Activated CD4-positive, alpha-beta memory T cell treated with anti-CD3 and anti-CD28 coated beads, Interleukin-2, amount 10 ng/mL, durations not matched to agents 7 days and 5 days (primary cell): ENCODE measurements at regions of chr3 and their contacts with region 1.

Region 1: GRCh38 chr3:99842826-99843589 is 25.3 kb downstream of the CMSS1 start:
- DNase-seq: no peak
- H3K4me3 Mint-ChIP-seq: no peak overlapping the region
- H3K27ac Mint-ChIP-seq: no peak overlapping the region
- H3K4me1 Mint-ChIP-seq: peaks cover 7% of the 10 kb centered on the region
- H3K27me3 Mint-ChIP-seq: no peaks in the 10 kb centered on the region

Region 2: DNA sequence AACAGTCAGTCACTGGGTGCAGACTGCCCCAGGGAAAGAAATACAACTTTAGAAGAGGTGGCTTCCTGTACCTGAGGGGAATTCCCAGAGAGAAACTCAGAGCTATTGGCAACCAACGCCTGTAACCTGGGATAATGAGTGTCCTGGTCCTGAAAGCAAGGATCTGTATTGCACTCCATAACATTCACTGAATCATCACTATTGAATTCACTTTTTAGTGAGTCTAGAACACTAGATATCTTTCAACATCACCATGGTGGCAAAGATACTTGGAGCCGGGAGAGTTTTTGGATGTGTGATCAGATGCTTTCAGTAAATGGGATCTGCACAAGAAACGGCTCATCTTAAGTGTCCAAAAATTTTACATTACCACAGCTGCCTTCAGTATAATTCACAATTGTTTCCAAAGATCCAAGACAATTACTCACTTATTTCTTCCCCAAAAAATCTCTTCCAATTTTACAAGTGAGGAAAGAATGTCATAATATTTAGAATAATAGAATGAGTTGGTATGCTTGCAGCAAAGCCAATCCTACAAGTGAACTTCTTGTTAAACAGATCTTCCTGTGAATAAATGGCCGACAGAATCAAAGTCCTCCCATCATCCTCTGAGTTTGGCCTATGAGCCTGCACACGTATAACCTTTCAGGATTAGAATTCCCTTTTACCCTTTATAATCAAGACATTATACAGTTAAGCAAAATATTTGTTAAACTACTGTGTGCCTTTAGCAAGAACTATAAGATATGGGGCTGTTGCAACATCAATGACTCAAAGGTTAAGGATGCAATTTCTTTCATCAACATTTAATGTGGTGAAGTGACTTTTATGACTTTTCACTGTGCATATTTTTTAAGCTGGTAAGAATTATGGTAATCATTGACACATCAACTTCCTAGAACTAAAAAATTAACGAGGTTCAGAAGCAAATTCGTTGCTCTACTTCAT is 447.9 kb before region 1 on chr3:
- CTCF ChIA-PET with region 1: no interaction called
- POLR2A ChIA-PET with region 1: no interaction called
- DNase-seq: no peak
- H3K4me3 Mint-ChIP-seq: no peak overlapping the region
- H3K27ac Mint-ChIP-seq: no peak overlapping the region
- H3K4me1 Mint-ChIP-seq: no peaks in the 10 kb centered on the region
- H3K27me3 Mint-ChIP-seq: no peaks in the 10 kb centered on the region

Region 3: GRCh38 chr3:99872923-99873254 is 29.9 kb after region 1 on chr3:
- CTCF ChIA-PET with region 1: no interaction called
- POLR2A ChIA-PET with region 1: no interaction called
- DNase-seq: peak; percentile 58
- H3K4me3 Mint-ChIP-seq: no peak overlapping the region
- H3K27ac Mint-ChIP-seq: peak overlapping the region; percentile 27
- H3K4me1 Mint-ChIP-seq: peaks cover 49% of the 10 kb centered on the region
- H3K27me3 Mint-ChIP-seq: peaks cover 16% of the 10 kb centered on the region

Region 4: DNA sequence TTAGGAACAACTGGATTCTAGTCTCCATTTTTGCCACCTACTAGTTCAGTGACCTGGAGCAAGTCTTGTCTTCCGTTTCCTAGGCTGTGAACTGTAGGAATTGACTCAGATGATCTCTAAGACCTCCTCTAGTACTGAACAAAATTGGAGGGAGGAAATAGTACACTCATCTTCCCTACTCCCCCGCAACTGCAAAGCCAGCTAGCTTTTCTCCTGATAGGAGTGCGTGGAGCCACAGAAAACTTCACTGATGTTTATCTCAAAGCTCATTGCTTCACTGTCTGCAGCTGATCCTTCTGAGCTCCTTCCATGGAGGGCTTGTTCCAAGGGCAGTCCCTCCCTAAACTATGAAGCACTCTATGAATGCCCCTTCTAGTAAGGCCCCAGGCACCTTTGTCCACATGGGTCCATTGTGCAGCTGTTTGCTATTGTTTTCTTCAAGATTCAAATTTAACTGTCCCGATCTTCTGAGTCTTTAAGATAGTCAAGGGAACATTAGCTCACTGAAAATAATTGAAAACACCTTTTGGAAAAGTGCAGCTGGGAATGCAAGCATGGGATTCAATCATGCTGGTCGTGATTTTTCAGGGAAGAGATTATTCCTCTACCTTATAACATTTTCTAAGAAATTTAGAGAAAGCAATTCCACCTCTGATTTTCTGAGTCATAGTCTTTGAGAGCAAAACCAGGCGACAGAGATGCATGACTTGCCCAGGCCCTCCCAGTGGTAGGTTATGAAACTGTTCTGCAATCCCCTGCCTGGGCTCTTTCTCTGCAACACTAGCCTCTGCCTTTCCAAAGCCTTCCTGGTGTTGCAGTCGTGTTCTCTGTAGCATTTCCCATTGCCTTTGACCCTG is 247.0 kb after region 1 on chr3:
- CTCF ChIA-PET with region 1: interaction called, 11 read pairs
- POLR2A ChIA-PET with region 1: no interaction called
- DNase-seq: peak; percentile 51
- H3K4me3 Mint-ChIP-seq: no peak overlapping the region
- H3K27ac Mint-ChIP-seq: no peak overlapping the region
- H3K4me1 Mint-ChIP-seq: peaks cover 40% of the 10 kb centered on the region
- H3K27me3 Mint-ChIP-seq: peaks cover 4% of the 10 kb centered on the region

Region 5: DNA sequence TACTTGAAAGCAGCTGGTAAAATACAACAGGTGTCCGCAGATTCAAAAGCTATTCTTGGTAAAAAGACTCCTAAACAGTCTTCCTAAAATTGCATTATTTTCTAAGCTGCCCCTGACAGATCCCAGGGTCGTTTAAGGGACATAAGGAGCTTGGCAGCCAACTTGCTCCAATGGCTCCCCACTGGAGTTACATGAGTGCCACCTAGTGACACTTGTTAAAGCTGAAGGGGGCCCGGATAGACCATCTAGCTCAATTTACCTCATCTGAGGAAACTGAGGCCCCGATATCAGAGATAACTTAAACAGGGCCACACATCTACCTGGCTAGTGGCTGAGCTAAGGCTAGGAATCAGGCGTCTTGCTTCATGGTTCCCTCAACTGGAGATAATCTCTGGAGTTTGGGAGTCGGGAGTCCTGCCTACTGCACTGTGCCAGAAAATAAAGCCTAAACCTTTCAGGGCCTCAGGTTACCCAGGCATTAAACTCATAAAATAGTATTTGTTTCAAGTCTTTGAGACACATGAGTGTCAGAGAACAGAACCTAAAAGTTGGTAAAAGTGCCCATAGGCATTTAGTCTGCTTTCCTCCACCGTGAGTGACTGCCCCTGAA is 411.3 kb after region 1 on chr3:
- CTCF ChIA-PET with region 1: interaction called, 50 read pairs
- POLR2A ChIA-PET with region 1: no interaction called
- DNase-seq: peak; percentile 56
- H3K4me3 Mint-ChIP-seq: no peak overlapping the region
- H3K27ac Mint-ChIP-seq: no peak overlapping the region
- H3K4me1 Mint-ChIP-seq: no peaks in the 10 kb centered on the region
- H3K27me3 Mint-ChIP-seq: no peaks in the 10 kb centered on the region